Esophagus squamous epithelium (tissue), 5 donors: ENCODE measurements at regions of chr9 and their contacts with region 1.

Region 1: GRCh38 chr9:34899535-34900158 is 58.4 kb upstream of the PHF24 start:
- DNase-seq: no peak
- H3K4me3 ChIP-seq: no peak overlapping the region
- H3K27ac ChIP-seq: no peak overlapping the region
- H3K4me1 ChIP-seq: no peaks in the 10 kb centered on the region
- H3K27me3 ChIP-seq: peaks cover 0 to 44% (median 0%) of the 10 kb centered on the region in 4 donors
- CTCF ChIP-seq: peak; percentile 75 to 89 (median 80)
- POLR2A ChIP-seq: no peak

Region 2: DNA sequence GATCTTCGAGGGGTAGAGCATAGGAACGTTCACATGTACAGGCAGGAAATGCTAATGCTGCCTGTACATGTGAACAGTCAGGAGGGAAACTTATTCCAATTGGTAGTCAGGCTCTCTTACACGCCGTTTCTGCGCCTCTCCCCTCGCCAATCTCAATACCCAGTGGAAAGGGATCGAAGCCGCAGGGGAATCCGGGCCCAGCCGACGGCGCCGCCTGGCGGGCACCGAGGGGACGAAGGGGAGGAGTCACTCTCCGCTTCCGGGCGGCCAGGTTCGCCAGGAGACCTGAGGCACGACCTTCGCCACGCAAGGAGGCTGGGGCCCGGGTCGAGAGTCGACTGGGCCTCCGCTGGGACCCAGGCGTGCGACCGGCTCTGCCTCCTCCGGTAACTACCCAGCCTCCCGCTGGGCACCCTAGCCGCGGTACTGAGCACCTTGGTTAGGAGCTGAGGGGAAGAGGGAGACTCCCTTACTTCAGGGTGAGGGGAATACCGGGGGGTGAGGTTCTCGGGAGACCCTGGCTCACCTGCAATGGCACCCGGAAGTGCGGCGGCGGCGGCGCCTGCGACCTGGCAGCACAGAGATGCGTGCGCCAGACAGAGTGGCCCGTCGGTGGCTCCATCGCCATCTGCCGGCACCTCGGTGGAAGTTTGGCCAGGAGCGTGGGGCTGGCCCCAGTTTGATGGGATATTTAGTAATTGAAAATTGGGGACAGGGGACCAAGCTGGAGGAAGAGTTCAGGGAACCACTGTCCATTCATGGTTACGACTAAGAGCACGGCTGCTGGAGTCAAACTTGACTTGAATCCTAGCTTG is 196.6 kb after region 1 on chr9 and contains the start of gene PIGO:
- intact Hi-C with region 1: loop called (anchors 10 kb)
- DNase-seq: peak; percentile 63
- H3K4me3 ChIP-seq: peak within 1 kb of the TSS; percentile 76 to 99 (median 90)
- H3K27ac ChIP-seq: peak within 1 kb of the TSS; percentile 96 to 100 (median 99)
- H3K4me1 ChIP-seq: peaks cover 7 to 27% (median 14%) of the 10 kb centered on the region in 3 donors
- H3K27me3 ChIP-seq: no peaks in the 10 kb centered on the region
- CTCF ChIP-seq: peak; percentile 64 to 87 (median 82)
- POLR2A ChIP-seq: peak in 2 of 4 donors; percentile 46 to 56
- total RNA-seq, gene PIGO: 10.9 to 14.1 (median 12.4) TPM